ENCODE measurements at regions of chr6 and their contacts with region 1.

Region 1: DNA sequence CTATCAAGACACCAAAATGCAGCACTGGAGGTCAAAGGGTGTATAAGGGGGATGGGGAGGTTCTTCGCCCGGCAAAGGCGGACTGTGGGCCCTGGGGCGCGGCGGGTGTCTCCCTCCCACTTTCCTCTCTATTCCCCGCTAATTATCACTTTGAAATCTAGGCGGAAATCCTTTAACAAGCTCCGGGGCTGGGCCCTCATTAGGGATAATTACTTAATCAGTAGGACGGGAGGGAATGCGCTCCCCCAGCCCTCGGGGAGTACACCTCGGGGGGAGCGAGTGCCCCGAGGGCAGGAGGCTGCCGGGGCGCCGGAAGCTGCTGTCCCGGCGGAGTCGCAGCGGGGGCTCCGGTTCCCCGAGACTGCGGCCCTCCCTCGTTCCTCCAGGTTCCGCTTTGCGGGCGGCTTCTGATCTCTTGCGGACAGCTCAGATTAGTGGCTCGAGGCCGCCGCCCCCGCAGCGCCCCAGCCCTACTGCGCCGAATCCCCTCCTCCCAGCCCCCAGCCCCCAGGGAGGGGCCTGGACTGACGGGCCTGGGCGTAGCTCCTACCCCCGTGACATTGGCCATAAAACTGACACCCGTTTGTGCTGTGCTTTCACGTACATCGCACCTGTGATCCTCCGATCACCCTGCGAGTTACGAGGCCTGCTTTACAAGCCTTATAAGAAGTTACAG is 14.7 kb downstream of the MUCL3 start:
- DNase-seq: no peak
- H3K4me3 ChIP-seq: peak overlapping the region in 1 of 3 experiments; percentile 18
- H3K27ac ChIP-seq: no peak overlapping the region
- H3K4me1 ChIP-seq: peaks cover 6% of the 10 kb centered on the region
- H3K27me3 ChIP-seq: peaks cover 3% of the 10 kb centered on the region
- CTCF ChIP-seq: no peak

Region 2: GRCh38 chr6:30998785-30999184 is 43.3 kb after region 1 on chr6:
- CTCF ChIA-PET with region 1: no interaction called
- dilution Hi-C with region 1: loop called (anchors 5 kb)
- in situ Hi-C with region 1: no loop called
- intact Hi-C with region 1: no loop called
- DNase-seq: peak; percentile 44
- H3K4me3 ChIP-seq: no peak overlapping the region
- H3K27ac ChIP-seq: no peak overlapping the region
- H3K4me1 ChIP-seq: no peaks in the 10 kb centered on the region
- H3K27me3 ChIP-seq: no peaks in the 10 kb centered on the region
- CTCF ChIP-seq: no peak